Adrenal gland (tissue), 19 donors: ENCODE measurements at regions of chr4 and their contacts with region 1.

Region 1: GRCh38 chr4:76388160-76388908 is 32.6 kb downstream of the CCDC158 start:
- DNase-seq: no peak
- H3K4me3 ChIP-seq: no peak overlapping the region
- H3K27ac ChIP-seq: no peak overlapping the region
- H3K4me1 ChIP-seq: no peaks in the 10 kb centered on the region
- H3K27me3 ChIP-seq: no peaks in the 10 kb centered on the region
- CTCF ChIP-seq: no peak
- POLR2A ChIP-seq: no peak

Region 2: DNA sequence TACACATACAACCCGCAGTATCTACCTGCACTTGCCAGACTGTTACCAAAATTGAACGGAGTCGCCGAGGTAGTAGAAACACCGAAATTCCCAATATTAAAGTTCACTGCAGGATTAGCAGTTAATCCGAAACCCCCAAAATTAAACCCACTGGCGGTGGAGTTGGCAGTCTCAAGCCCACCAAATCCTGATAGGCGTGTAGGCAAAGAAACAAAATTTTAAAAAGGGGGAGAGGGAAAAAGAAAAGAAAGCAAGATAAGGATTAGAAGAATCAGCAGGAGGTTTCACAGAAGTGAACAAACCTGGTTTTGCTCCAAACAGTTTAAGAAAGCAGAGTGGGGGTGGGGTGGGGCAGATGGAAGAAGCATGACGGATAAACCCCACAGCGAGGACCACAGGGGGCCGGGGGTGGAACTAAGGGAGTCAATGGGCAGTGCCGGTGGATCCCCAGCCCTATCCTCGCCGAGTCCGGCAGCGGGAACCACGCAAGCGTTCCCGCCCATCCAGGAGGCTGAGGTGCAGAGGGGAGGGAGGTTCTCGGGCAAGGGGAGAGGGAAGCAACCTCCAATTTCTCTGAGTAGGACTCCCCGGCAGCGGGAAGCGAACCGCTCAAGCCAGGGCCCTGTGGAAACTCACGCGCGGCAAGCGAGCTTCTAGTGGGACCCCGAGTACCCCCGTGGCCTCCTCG is 240.7 kb before region 1 on chr4:
- intact Hi-C with region 1: no loop called
- DNase-seq: peak; percentile 58 to 75 (median 71)
- H3K4me3 ChIP-seq: peak overlapping the region; percentile 76 to 93 (median 88)
- H3K27ac ChIP-seq: peak overlapping the region; percentile 83 to 94 (median 88)
- H3K4me1 ChIP-seq: peaks cover 0 to 23% of the 10 kb centered on the region in 2 donors
- H3K27me3 ChIP-seq: no peaks in the 10 kb centered on the region
- CTCF ChIP-seq: no peak
- POLR2A ChIP-seq: no peak

Region 3: GRCh38 chr4:76266627-76267026 is 121.7 kb before region 1 on chr4:
- intact Hi-C with region 1: loop called in 1 of 2 experiments (anchors 10 kb)
- DNase-seq: no peak
- H3K4me3 ChIP-seq: no peak overlapping the region
- H3K27ac ChIP-seq: no peak overlapping the region
- H3K4me1 ChIP-seq: no peaks in the 10 kb centered on the region
- H3K27me3 ChIP-seq: no peaks in the 10 kb centered on the region
- CTCF ChIP-seq: no peak
- POLR2A ChIP-seq: no peak

Region 4: DNA sequence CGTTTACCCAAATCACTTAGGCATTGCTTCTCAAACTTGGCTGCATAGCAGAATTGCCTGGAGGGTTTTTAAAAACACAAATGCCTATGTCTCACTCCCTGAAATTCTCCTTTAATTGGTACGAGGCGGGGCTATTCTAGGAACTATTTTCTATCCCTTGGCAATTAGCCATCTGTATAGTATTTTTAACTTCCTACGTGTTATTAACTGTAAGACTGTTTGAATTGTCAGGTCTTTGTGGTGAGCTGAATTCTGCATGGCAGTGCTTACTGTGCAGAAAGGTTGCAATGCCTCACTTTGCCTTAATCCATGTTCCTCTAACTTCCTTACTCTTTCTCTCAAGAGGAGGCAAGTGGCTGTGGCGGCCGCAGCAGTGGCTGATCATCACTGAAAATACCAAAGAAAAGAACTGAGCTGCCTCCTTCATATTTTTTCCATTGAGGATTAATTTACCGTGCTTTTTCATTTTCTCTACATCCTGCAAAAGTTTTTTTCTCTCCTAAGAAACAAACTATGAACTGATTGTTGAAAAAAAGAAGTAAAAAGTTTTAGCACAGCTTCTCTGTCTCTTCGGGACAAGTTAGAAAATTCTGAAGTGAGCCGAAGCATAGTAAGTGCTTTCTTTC is 46.7 kb after region 1 on chr4 and contains the start of gene SHROOM3:
- intact Hi-C with region 1: no loop called
- DNase-seq: no peak
- H3K4me3 ChIP-seq: no peak within 1 kb of the TSS
- H3K27ac ChIP-seq: no peak within 1 kb of the TSS
- H3K4me1 ChIP-seq: no peaks in the 10 kb centered on the region
- H3K27me3 ChIP-seq: peaks cover 5% of the 10 kb centered on the region
- CTCF ChIP-seq: no peak
- POLR2A ChIP-seq: no peak
- total RNA-seq, gene SHROOM3: 3.2 to 16.2 (median 9.2) TPM